H1 (cell line): ENCODE measurements at regions of chr2 and their contacts with region 1.

Region 1: GRCh38 chr2:26345545-26346453 is at the start of gene SELENOI:
- DNase-seq: peak; percentile 97 to 100
- H3K4me3 ChIP-seq: peak within 1 kb of the TSS; percentile 91 to 96 (median 94)
- H3K27ac ChIP-seq: peak within 1 kb of the TSS; percentile 77
- H3K4me1 ChIP-seq: no peaks in the 10 kb centered on the region; a peak in 3 of 7 replicates
- H3K27me3 ChIP-seq: no peaks in the 10 kb centered on the region; a peak in 1 of 7 replicates
- CTCF ChIP-seq: no peak
- EP300 ChIP-seq: peak; percentile 18 to 47; a peak in 1 of 3 replicates
- POLR2A ChIP-seq: peak; percentile 88 to 95
- RAD21 ChIP-seq: no peak
- total RNA-seq, gene SELENOI: 54.8 and 63.8 TPM in 2 replicates

Region 2: GRCh38 chr2:26244309-26245121 is 101.3 kb before region 1 on chr2 and contains the starts of genes HADHA and HADHB:
- CTCF ChIA-PET with region 1: no interaction called
- POLR2A ChIA-PET with region 1: interaction called, 15 read pairs
- DNase-seq: peak; percentile 87 to 96
- H3K4me3 ChIP-seq: peak within 1 kb of the TSS; percentile 77 to 98 (median 85)
- H3K27ac ChIP-seq: peak within 1 kb of the TSS; percentile 94
- H3K4me1 ChIP-seq: peaks cover 0 to 6% (median 1%) of the 10 kb centered on the region in 4 experiments; a peak in 3 of 7 replicates
- H3K27me3 ChIP-seq: no peaks in the 10 kb centered on the region
- CTCF ChIP-seq: peak in 1 of 3 experiments; percentile 41; a peak in 2 of 4 replicates
- EP300 ChIP-seq: no peak
- POLR2A ChIP-seq: peak; percentile 90 to 96
- RAD21 ChIP-seq: no peak; a peak in 2 of 4 replicates
- total RNA-seq, gene HADHA: 126 and 131 TPM in 2 replicates
- total RNA-seq, gene HADHB: 52.3 and 57.3 TPM in 2 replicates

Region 3: GRCh38 chr2:26268184-26268583 is 77.6 kb before region 1 on chr2:
- CTCF ChIA-PET with region 1: no interaction called
- POLR2A ChIA-PET with region 1: no interaction called
- DNase-seq: no peak
- H3K4me3 ChIP-seq: no peak overlapping the region
- H3K27ac ChIP-seq: no peak overlapping the region
- H3K4me1 ChIP-seq: no peaks in the 10 kb centered on the region
- H3K27me3 ChIP-seq: no peaks in the 10 kb centered on the region
- CTCF ChIP-seq: no peak
- EP300 ChIP-seq: no peak
- POLR2A ChIP-seq: no peak
- RAD21 ChIP-seq: no peak

Region 4: GRCh38 chr2:26292665-26293064 is 53.1 kb before region 1 on chr2:
- CTCF ChIA-PET with region 1: no interaction called
- POLR2A ChIA-PET with region 1: no interaction called
- DNase-seq: no peak
- H3K4me3 ChIP-seq: no peak overlapping the region
- H3K27ac ChIP-seq: no peak overlapping the region
- H3K4me1 ChIP-seq: peaks cover 0 to 3% (median 1%) of the 10 kb centered on the region in 4 experiments; a peak in 4 of 7 replicates
- H3K27me3 ChIP-seq: no peaks in the 10 kb centered on the region
- CTCF ChIP-seq: no peak
- EP300 ChIP-seq: no peak
- POLR2A ChIP-seq: no peak
- RAD21 ChIP-seq: no peak